B cell (primary cell): ENCODE measurements at regions of chr19 and their contacts with region 1.

Region 1: GRCh38 chr19:12495002-12495802 is 10.6 kb upstream of the ZNF709 start:
- DNase-seq: peak; percentile 95
- ATAC-seq: peak; percentile 99
- H3K4me3 ChIP-seq: peak overlapping the region; percentile 68 to 84 (median 76)
- H3K4me3 Mint-ChIP-seq: peak overlapping the region; percentile 92
- H3K27ac ChIP-seq: peak overlapping the region; percentile 82 to 84
- H3K27ac Mint-ChIP-seq: peak overlapping the region; percentile 86
- H3K4me1 ChIP-seq: peaks cover 7 to 11% of the 10 kb centered on the region in 2 donors
- H3K4me1 Mint-ChIP-seq: peaks cover 14% of the 10 kb centered on the region
- H3K27me3 ChIP-seq: no peaks in the 10 kb centered on the region
- H3K27me3 Mint-ChIP-seq: no peaks in the 10 kb centered on the region
- CTCF ChIP-seq: peak; percentile 56

Region 2: GRCh38 chr19:12400633-12401502 is 94.3 kb before region 1 on chr19 and contains the start of gene ZNF799:
- CTCF ChIA-PET with region 1: no interaction called
- POLR2A ChIA-PET with region 1: interaction called, 9 read pairs
- intact Hi-C with region 1: loop called (anchors 2 kb)
- DNase-seq: peak; percentile 89
- ATAC-seq: peak; percentile 91
- H3K4me3 ChIP-seq: peak within 1 kb of the TSS; percentile 61 to 93 (median 90)
- H3K4me3 Mint-ChIP-seq: peak within 1 kb of the TSS; percentile 91
- H3K27ac ChIP-seq: peak within 1 kb of the TSS in 1 of 2 donors; percentile 68
- H3K27ac Mint-ChIP-seq: peak within 1 kb of the TSS; percentile 85
- H3K4me1 ChIP-seq: peaks cover 4 to 7% of the 10 kb centered on the region in 2 donors
- H3K4me1 Mint-ChIP-seq: peaks cover 20% of the 10 kb centered on the region
- H3K27me3 ChIP-seq: no peaks in the 10 kb centered on the region
- H3K27me3 Mint-ChIP-seq: no peaks in the 10 kb centered on the region
- CTCF ChIP-seq: no peak
- total RNA-seq, gene ZNF799: 10.5 and 11.1 TPM in 2 replicates

Region 3: GRCh38 chr19:12453491-12453890 is 41.7 kb before region 1 on chr19:
- CTCF ChIA-PET with region 1: no interaction called
- POLR2A ChIA-PET with region 1: no interaction called
- intact Hi-C with region 1: no loop called
- DNase-seq: no peak
- ATAC-seq: no peak
- H3K4me3 ChIP-seq: no peak overlapping the region
- H3K4me3 Mint-ChIP-seq: no peak overlapping the region
- H3K27ac ChIP-seq: no peak overlapping the region
- H3K27ac Mint-ChIP-seq: no peak overlapping the region
- H3K4me1 ChIP-seq: no peaks in the 10 kb centered on the region
- H3K4me1 Mint-ChIP-seq: no peaks in the 10 kb centered on the region
- H3K27me3 ChIP-seq: no peaks in the 10 kb centered on the region
- H3K27me3 Mint-ChIP-seq: no peaks in the 10 kb centered on the region
- CTCF ChIP-seq: no peak

Region 4: DNA sequence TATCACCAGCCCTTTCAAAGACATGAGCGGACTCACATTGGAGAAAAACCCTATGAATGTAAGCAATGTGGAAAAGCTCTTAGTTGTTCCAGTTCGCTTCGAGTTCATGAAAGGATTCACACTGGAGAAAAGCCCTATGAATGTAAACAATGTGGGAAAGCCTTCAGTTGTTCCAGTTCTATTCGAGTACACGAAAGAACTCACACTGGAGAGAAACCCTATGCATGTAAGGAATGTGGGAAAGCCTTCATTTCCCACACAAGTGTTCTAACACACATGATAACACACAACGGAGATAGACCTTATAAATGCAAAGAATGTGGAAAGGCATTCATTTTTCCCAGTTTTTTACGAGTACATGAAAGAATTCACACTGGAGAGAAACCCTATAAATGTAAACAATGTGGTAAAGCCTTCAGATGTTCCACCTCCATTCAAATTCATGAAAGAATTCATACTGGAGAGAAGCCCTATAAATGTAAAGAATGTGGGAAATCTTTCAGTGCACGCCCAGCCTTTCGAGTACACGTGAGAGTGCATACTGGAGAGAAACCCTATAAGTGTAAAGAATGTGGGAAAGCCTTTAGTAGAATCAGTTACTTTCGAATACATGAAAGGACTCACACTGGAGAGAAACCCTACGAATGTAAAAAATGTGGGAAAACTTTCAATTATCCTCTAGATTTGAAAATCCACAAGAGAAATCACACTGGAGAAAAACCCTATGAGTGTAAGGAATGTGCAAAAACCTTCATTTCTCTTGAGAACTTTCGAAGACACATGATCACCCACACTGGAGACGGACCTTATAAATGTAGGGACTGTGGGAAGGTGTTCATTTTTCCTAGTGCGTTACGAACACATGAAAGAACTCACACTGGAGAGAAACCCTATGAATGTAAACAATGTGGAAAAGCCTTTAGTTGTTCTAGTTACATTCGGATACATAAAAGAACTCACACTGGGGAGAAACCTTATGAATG is 133.1 kb after region 1 on chr19:
- CTCF ChIA-PET with region 1: no interaction called
- POLR2A ChIA-PET with region 1: no interaction called
- intact Hi-C with region 1: no loop called
- DNase-seq: no peak
- ATAC-seq: no peak
- H3K4me3 ChIP-seq: no peak overlapping the region
- H3K4me3 Mint-ChIP-seq: no peak overlapping the region
- H3K27ac ChIP-seq: no peak overlapping the region
- H3K27ac Mint-ChIP-seq: no peak overlapping the region
- H3K4me1 ChIP-seq: no peaks in the 10 kb centered on the region
- H3K4me1 Mint-ChIP-seq: peaks cover 3% of the 10 kb centered on the region
- H3K27me3 ChIP-seq: no peaks in the 10 kb centered on the region
- H3K27me3 Mint-ChIP-seq: no peaks in the 10 kb centered on the region
- CTCF ChIP-seq: no peak